ENCODE measurements at regions of chr7 and their contacts with region 1.

Region 1: DNA sequence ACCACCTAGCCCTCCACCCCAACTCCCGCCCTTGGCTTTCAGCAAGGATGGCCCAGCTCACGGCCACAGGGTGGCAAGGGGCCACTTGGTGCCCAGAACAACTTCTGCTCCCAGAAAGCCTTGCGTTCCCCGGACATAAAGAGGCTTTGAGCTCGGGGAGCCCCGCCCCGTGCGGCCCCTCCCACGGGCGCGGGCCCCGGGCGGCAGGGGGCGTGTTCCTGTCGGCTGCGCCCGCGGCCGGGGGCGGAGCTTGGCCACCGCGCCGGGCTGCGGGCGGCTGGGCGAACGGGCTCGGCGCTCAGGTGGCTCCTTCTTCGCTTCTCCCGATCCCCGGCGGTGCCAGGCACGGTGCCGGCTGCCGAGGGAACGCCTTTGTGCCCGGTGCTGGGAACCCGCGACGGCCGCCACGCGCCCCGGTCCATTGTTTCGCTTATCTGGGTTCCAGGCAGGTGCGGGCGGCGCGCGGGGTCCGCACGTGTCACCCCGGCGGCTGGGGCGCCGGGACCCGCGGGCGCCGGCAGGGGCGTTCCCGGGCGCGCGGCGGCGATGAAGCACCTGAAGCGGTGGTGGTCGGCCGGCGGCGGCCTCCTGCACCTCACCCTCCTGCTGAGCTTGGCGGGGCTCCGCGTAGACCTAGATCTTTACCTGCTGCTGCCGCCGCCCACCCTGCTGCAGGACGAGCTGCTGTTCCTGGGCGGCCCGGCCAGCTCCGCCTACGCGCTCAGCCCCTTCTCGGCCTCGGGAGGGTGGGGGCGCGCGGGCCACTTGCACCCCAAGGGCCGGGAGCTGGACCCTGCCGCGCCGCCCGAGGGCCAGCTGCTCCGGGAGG is at the start of gene NFE2L3:
- DNase-seq: peak; percentile 82
- H3K4me3 Mint-ChIP-seq: peak within 1 kb of the TSS; percentile 99
- H3K27ac Mint-ChIP-seq: peak within 1 kb of the TSS; percentile 97
- H3K4me1 Mint-ChIP-seq: peaks cover 56% of the 10 kb centered on the region
- H3K27me3 Mint-ChIP-seq: no peaks in the 10 kb centered on the region
- total RNA-seq, gene NFE2L3: 42.3 and 44.6 TPM in 2 replicates

Region 2: GRCh38 chr7:25857376-25857921 is 294.7 kb before region 1 on chr7:
- intact Hi-C with region 1: loop called (anchors 1 kb)
- DNase-seq: no peak
- H3K4me3 Mint-ChIP-seq: no peak overlapping the region
- H3K27ac Mint-ChIP-seq: no peak overlapping the region
- H3K4me1 Mint-ChIP-seq: peaks cover 48% of the 10 kb centered on the region
- H3K27me3 Mint-ChIP-seq: peaks cover 27% of the 10 kb centered on the region

Region 3: GRCh38 chr7:25894902-25895791 is 257.0 kb before region 1 on chr7:
- intact Hi-C with region 1: loop called (anchors 5 kb)
- DNase-seq: peak; percentile 53
- H3K4me3 Mint-ChIP-seq: peak overlapping the region; percentile 53
- H3K27ac Mint-ChIP-seq: no peak overlapping the region
- H3K4me1 Mint-ChIP-seq: peaks cover 31% of the 10 kb centered on the region
- H3K27me3 Mint-ChIP-seq: peaks cover 7% of the 10 kb centered on the region

Region 4: DNA sequence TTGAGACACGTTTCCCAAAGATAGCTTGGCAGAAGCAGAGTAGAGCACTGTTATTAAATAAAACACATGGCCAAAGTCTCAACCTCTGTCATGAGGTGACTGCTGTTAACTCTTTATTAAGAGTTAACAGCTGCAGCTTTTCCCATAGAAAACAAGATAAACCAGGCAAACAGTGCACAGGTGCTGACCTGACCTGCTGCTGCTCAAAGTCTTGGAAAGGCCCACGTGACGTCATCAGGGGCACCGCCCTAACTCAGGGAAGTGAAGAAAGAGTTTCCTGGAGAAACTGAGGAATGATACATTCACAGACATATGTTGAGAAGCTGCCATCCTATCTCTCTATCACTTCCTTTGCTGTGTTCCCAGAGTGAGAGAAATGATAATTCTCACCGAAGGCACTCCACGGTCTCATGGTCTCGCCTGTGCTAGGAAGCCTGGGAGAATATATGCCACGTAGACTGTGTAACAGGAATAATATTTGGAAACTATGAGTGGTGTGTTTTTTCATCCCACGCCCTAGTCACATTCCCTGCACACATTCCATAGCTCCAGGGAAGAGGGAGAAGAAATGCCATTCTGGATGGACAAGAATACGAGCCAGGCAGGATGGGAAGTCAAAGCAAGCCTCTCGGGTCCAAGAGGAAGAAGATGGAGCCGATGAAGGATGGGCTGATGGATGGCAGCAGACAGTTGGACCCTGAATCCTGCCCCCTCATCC is 146.3 kb before region 1 on chr7:
- intact Hi-C with region 1: no loop called
- DNase-seq: no peak
- H3K4me3 Mint-ChIP-seq: no peak overlapping the region
- H3K27ac Mint-ChIP-seq: no peak overlapping the region
- H3K4me1 Mint-ChIP-seq: no peaks in the 10 kb centered on the region
- H3K27me3 Mint-ChIP-seq: peaks cover 11% of the 10 kb centered on the region

Region 5: GRCh38 chr7:26166684-26167271 is 14.6 kb after region 1 on chr7:
- intact Hi-C with region 1: loop called (anchors 1 kb)
- DNase-seq: no peak
- H3K4me3 Mint-ChIP-seq: no peak overlapping the region
- H3K27ac Mint-ChIP-seq: peak overlapping the region; percentile 88
- H3K4me1 Mint-ChIP-seq: peaks cover 40% of the 10 kb centered on the region
- H3K27me3 Mint-ChIP-seq: no peaks in the 10 kb centered on the region

Region 6: DNA sequence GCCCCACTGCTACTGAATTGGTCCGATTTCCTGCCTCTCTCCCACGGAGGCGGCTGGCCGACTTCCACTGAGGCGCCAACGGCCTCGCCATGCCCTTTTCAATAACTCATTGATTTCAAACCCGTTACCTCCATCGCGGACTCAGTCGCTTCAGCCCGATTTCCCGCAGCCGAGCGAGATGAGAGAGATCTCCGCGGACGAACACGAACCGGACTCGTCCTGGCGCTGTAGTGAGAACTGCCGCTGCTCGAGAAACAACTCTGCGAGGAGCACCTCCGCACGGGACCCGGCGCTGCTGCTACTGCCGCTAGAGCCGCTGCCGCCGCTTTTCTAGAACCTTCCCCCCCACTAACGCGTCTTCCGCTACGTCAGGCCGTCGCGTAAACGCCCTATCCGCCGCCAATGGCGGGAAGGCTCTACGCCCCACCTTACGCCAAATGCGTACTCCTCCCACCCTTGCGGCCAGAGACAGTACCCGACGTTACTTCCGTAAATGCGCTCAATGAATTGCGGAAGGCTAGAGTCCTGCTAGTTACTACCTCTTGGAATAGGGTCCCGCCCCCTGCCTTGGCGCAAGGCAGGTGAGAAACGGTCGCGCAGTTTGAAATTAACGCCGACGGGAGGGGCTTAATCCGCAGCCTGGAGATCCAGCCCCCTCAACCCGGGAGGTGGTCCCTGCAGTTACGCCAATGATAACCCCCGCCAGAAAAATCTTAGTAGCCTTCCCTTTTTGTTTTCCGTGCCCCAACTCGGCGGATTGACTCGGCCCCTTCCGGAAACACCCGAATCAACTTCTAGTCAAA is 48.5 kb after region 1 on chr7 and contains the start of gene HNRNPA2B1:
- intact Hi-C with region 1: loop called (anchors 1 kb)
- DNase-seq: peak; percentile 97
- H3K4me3 Mint-ChIP-seq: peak within 1 kb of the TSS; percentile 100
- H3K27ac Mint-ChIP-seq: peak within 1 kb of the TSS; percentile 100
- H3K4me1 Mint-ChIP-seq: peaks cover 45% of the 10 kb centered on the region
- H3K27me3 Mint-ChIP-seq: no peaks in the 10 kb centered on the region
- total RNA-seq, gene HNRNPA2B1: 835 and 845 TPM in 2 replicates

Region 7: GRCh38 chr7:26365077-26365900 is 213.1 kb after region 1 on chr7:
- intact Hi-C with region 1: loop called (anchors 1 kb)
- DNase-seq: peak; percentile 30
- H3K4me3 Mint-ChIP-seq: no peak overlapping the region
- H3K27ac Mint-ChIP-seq: peak overlapping the region; percentile 63
- H3K4me1 Mint-ChIP-seq: peaks cover 20% of the 10 kb centered on the region
- H3K27me3 Mint-ChIP-seq: no peaks in the 10 kb centered on the region

Region 8: GRCh38 chr7:26490650-26491624 is 338.8 kb after region 1 on chr7:
- intact Hi-C with region 1: no loop called
- DNase-seq: no peak
- H3K4me3 Mint-ChIP-seq: no peak overlapping the region
- H3K27ac Mint-ChIP-seq: no peak overlapping the region
- H3K4me1 Mint-ChIP-seq: no peaks in the 10 kb centered on the region
- H3K27me3 Mint-ChIP-seq: peaks cover 6% of the 10 kb centered on the region

Measured in activated T-helper 2 cell treated with anti-CD3 and anti-CD28 coated beads, Interferon-gamma antibody, Interleukin-2, Interleukin-4, amounts not matched to agents 10 μg/mL and 5 μg/mL and 100 μg/mL, durations not matched to agents 14 hours and 24 hours and 36 hours (primary cell).